B cell (primary cell): ENCODE measurements at regions of chr16 and their contacts with region 1.

Region 1: DNA sequence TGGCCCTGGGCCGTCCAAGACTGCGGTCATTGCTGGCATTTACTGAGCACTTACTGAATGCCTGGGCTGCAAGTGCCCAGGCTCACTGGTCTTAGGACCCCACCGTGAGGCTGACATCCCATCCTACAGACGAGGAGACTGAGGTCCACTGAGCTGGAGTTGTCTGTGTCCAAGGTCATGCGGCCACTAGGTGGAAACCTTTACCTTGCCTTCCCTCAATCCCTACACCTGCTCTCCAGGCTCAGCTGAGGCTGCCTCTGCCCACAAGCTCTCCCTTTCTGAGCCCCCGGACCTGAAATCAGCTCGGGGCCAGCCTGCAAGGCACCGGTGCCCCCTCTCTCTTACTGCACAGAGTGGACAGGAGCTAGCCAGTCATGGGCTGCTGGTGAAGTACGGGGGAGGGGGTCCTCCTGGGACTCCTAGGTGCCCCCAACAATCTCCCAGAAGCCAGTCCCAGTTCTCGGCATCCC is 1.5 kb downstream of the CASKIN1 start:
- DNase-seq: peak; percentile 77
- ATAC-seq: peak; percentile 73
- H3K4me3 ChIP-seq: peak overlapping the region in 1 of 5 experiments; percentile 44
- H3K4me3 Mint-ChIP-seq: peak overlapping the region; percentile 78
- H3K27ac ChIP-seq: no peak overlapping the region
- H3K27ac Mint-ChIP-seq: peak overlapping the region; percentile 37
- H3K4me1 ChIP-seq: peaks cover 12 to 22% of the 10 kb centered on the region in 2 donors
- H3K4me1 Mint-ChIP-seq: peaks cover 10% of the 10 kb centered on the region
- H3K27me3 ChIP-seq: peaks cover 0 to 50% (median 20%) of the 10 kb centered on the region in 4 experiments
- H3K27me3 Mint-ChIP-seq: peaks cover 28% of the 10 kb centered on the region
- CTCF ChIP-seq: peak; percentile 47

Region 2: DNA sequence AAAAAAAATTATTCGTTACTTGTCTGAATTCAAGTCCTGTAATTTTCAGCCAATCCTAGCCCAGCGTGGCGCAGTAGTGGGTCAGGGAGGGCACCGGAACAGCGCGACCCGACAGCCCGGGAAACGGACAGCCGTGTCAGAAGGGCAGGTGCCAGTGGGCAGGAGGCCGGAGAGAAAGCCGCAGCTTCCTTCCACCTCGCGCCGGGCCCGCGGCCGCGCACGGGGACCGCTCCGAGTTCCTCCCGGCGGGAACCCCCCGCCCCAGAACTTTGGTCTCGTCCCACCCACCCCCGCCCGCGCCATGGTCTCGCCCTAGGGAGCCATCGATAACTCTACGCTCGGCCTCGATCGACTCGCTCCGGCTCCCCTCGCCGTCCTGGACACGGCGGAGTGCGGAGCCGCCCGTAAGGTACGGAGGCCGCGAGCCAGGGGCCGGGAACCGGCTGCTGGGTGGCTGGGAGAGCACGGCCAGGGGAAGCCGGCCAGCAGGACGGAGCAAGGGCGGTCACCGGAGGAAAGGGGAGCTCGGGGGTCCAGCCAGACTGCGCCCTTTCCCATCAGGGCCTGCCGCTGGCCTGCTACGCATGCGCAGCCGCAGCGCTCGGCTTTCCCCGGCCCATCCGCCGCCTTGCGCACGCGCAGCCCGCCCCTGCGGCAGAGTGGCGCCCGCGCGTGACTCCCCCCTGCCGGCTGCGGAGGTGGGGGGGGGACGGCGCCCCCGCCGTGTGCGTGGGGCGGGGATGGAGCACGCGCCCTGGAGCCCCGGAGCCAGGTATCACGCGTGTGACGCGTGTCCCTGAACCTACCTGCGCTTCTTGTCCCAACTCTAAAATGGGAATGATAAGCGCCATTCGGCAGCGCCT is 10.4 kb after region 1 on chr16 and contains the start of gene MLST8:
- CTCF ChIA-PET with region 1: interaction called, 20 read pairs
- POLR2A ChIA-PET with region 1: interaction called, 3 read pairs
- intact Hi-C with region 1: no loop called
- DNase-seq: peak; percentile 98
- ATAC-seq: peak; percentile 90
- H3K4me3 ChIP-seq: peak within 1 kb of the TSS; percentile 73 to 94 (median 76)
- H3K4me3 Mint-ChIP-seq: peak within 1 kb of the TSS; percentile 87
- H3K27ac ChIP-seq: peak within 1 kb of the TSS; percentile 86 to 89
- H3K27ac Mint-ChIP-seq: peak within 1 kb of the TSS; percentile 94
- H3K4me1 ChIP-seq: peaks cover 12 to 22% of the 10 kb centered on the region in 2 donors
- H3K4me1 Mint-ChIP-seq: peaks cover 21% of the 10 kb centered on the region
- H3K27me3 ChIP-seq: no peaks in the 10 kb centered on the region
- H3K27me3 Mint-ChIP-seq: peaks cover 3% of the 10 kb centered on the region
- CTCF ChIP-seq: peak; percentile 32
- total RNA-seq, gene MLST8: 36.1 and 39.0 TPM in 2 replicates

Region 3: DNA sequence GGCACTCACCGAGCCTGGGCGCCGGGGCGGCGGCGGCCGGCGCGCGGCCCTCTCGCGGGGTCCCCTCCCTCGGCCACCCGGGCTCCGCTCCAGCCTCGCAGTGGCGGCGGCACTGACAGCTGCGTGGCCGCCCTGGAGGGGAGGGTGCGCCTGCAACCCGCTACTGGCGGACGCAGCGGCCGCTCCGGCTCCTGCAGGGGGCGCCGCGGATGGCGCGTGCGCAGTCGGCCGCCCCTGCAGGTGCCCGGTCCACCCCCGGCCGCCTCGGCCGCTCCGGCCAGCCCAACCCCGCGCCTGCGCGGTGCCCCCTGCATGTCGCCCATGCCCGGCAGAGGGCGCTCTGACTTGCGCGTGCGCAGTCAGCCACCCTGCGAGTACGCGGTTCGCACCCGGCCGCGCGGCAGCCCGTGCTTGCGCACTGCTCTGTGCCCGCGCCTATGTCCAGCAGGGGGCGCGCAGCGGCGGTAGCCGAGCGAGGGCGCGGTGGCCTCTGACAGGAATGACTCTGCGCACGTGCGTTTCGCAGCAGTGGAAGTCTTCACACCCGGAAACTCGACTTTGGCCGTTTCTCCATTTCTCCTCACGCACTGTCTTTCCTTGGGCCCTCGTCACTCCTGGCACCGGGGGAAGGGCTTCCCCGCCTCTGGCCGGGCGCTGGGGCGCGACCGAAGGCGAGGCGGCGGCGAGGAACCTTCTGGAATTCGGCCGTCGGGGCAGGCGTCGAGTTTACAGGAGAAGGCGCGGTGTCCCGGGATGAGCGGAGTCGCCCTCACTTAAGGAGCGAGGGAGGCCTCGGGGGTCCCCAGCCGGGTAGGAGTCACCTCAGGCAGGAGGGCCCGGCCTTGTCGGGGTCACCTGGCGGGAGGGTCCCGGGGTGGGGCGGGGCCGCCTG is 145.9 kb after region 1 on chr16 and contains the start of gene ABCA3:
- CTCF ChIA-PET with region 1: no interaction called
- POLR2A ChIA-PET with region 1: no interaction called
- intact Hi-C with region 1: loop called (anchors 10 kb)
- DNase-seq: peak; percentile 96
- ATAC-seq: peak; percentile 83
- H3K4me3 ChIP-seq: peak within 1 kb of the TSS; percentile 17 to 69 (median 58)
- H3K4me3 Mint-ChIP-seq: peak within 1 kb of the TSS; percentile 86
- H3K27ac ChIP-seq: no peak within 1 kb of the TSS
- H3K27ac Mint-ChIP-seq: peak within 1 kb of the TSS; percentile 90
- H3K4me1 ChIP-seq: peaks cover 15 to 19% of the 10 kb centered on the region in 2 donors
- H3K4me1 Mint-ChIP-seq: peaks cover 12% of the 10 kb centered on the region
- H3K27me3 ChIP-seq: peaks cover 0 to 22% (median 3%) of the 10 kb centered on the region in 4 experiments
- H3K27me3 Mint-ChIP-seq: no peaks in the 10 kb centered on the region
- CTCF ChIP-seq: peak; percentile 100
- total RNA-seq, gene ABCA3: 5.1 and 5.4 TPM in 2 replicates

Region 4: DNA sequence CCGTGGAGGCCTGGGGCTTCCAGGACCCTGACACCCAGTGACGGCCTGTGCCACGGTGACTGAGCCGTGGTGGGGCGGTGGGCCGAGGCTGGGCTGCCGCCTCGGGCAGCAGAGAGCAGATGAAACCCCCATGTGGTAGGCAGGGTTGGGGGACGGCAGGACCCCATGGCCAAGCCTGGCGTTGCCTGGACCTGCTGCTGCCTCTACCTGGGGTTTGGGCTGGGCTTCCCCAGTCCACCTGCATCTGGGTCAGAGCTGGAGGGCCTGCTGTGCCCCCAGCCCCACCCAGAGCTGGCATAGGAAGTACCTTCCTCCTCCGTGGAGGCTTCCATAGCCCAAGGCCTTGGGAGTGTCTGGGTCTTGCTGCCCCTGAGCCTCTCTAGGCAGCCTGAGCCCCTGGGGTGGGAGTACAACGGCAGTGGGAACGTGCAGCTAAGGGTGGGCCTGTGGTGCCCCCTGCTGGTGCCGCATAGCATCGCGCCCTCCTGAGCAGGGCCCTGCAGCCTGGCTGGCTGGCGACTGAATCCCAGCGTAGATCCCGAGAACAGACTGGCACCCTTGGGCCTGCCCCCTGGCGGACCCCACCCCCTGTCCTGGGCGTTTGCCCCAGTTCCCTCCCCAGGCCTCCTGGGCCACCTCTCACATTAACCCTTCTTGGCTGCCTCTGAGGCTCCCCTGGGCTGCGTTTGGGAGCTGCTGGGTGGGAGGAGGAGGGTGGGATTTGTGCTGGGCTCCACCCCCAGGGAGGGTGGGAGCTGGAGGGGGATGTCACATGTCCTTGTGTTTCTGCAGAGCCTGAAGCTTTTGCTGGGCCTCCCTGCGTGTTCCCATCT is 306.2 kb after region 1 on chr16:
- CTCF ChIA-PET with region 1: interaction called, 41 read pairs
- POLR2A ChIA-PET with region 1: interaction called, 3 read pairs
- intact Hi-C with region 1: no loop called
- DNase-seq: peak; percentile 86
- ATAC-seq: peak; percentile 97
- H3K4me3 ChIP-seq: no peak overlapping the region
- H3K4me3 Mint-ChIP-seq: no peak overlapping the region
- H3K27ac ChIP-seq: no peak overlapping the region
- H3K27ac Mint-ChIP-seq: no peak overlapping the region
- H3K4me1 ChIP-seq: peaks cover 0 to 8% of the 10 kb centered on the region in 2 donors
- H3K4me1 Mint-ChIP-seq: peaks cover 11% of the 10 kb centered on the region
- H3K27me3 ChIP-seq: no peaks in the 10 kb centered on the region
- H3K27me3 Mint-ChIP-seq: no peaks in the 10 kb centered on the region
- CTCF ChIP-seq: peak; percentile 99

Region 5: GRCh38 chr16:2603165-2604015 is 408.5 kb after region 1 on chr16:
- CTCF ChIA-PET with region 1: no interaction called
- POLR2A ChIA-PET with region 1: no interaction called
- intact Hi-C with region 1: loop called (anchors 10 kb)
- DNase-seq: peak; percentile 83
- ATAC-seq: peak; percentile 60
- H3K4me3 ChIP-seq: peak overlapping the region; percentile 47 to 90 (median 76)
- H3K4me3 Mint-ChIP-seq: peak overlapping the region; percentile 97
- H3K27ac ChIP-seq: peak overlapping the region; percentile 40 to 76
- H3K27ac Mint-ChIP-seq: peak overlapping the region; percentile 94
- H3K4me1 ChIP-seq: peaks cover 9 to 15% of the 10 kb centered on the region in 2 donors
- H3K4me1 Mint-ChIP-seq: peaks cover 20% of the 10 kb centered on the region
- H3K27me3 ChIP-seq: no peaks in the 10 kb centered on the region
- H3K27me3 Mint-ChIP-seq: no peaks in the 10 kb centered on the region
- CTCF ChIP-seq: no peak